Activated CD4-positive, alpha-beta memory T cell treated with anti-CD3 and anti-CD28 coated beads, Interleukin-2, amount 10 ng/mL, durations not matched to agents 7 days and 5 days (primary cell): ENCODE measurements at regions of chr6 and their contacts with region 1.

Region 1: GRCh38 chr6:139375232-139376016 is 976 bp upstream of the CITED2 start:
- DNase-seq: peak; percentile 86
- H3K4me3 Mint-ChIP-seq: peak overlapping the region; percentile 99
- H3K27ac Mint-ChIP-seq: peak overlapping the region; percentile 90
- H3K4me1 Mint-ChIP-seq: peaks cover 45% of the 10 kb centered on the region
- H3K27me3 Mint-ChIP-seq: no peaks in the 10 kb centered on the region

Region 2: DNA sequence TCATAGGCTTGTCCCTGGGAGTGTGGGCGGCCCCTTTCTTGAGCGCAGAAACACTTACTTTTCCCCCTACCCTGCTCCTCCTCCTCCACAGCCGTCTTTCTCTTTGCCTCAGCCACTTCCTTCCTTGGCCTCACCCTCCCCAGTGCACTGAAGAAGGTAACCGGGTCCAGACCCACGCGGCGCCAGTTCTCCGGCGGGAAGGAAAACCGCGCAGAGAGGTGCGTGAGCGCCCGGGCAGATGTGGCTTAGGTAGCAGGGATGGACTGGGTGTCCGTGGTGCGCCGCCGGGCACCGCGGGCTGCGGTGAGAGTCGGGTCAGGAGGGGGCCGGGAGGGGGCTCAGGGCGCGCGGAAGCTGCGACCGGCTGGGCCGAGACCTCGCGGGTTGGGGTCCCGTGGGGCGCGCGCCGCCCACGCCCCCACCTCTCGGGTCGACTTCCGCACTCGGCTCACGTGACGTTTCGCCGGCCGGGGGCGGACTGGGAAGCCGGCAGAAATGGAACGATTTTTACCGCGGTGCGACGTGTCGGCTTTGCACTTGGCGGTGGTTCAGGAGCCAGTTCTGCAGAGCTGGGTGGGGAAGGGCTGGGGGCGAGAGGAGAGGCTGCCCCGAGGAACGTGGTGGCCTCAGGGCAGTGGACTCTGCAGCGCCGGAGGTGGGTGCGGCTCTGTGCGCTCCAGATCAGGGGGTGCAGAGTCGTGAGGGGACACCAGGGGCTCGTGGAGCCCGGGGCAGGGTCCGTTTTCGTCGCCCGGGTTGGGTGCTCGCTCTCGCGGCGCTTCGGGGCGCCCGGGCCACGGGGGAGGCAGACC is 346.6 kb before region 1 on chr6 and contains the start of gene ABRACL:
- CTCF ChIA-PET with region 1: no interaction called
- POLR2A ChIA-PET with region 1: interaction called, 37 read pairs
- DNase-seq: peak; percentile 83
- H3K4me3 Mint-ChIP-seq: peak within 1 kb of the TSS; percentile 91
- H3K27ac Mint-ChIP-seq: peak within 1 kb of the TSS; percentile 75
- H3K4me1 Mint-ChIP-seq: peaks cover 25% of the 10 kb centered on the region
- H3K27me3 Mint-ChIP-seq: no peaks in the 10 kb centered on the region
- total RNA-seq, gene ABRACL: 174 to 176 TPM

Region 3: DNA sequence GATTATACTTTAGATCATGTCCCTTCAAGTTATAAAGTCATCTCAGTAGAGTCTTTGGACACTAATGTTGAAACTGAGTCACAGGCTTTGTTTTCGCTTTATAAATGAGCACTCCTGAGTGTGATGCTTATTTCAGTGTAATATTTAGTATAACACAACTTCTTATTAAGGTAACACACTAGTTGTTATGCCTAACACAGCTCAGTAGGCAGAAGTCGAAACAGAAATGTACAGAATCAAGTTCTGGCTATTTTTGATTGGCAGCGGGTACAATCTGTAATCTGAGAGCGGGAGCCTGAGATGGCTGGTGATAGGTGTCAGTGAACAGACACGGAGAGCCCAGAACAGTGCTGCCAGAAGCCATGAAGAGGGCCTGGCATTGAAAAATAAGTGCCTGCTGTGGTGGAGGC is 229.1 kb before region 1 on chr6:
- CTCF ChIA-PET with region 1: interaction called, 5 read pairs
- POLR2A ChIA-PET with region 1: interaction called, 12 read pairs
- DNase-seq: no peak
- H3K4me3 Mint-ChIP-seq: peak overlapping the region; percentile 49
- H3K27ac Mint-ChIP-seq: peak overlapping the region; percentile 88
- H3K4me1 Mint-ChIP-seq: peaks cover 93% of the 10 kb centered on the region
- H3K27me3 Mint-ChIP-seq: no peaks in the 10 kb centered on the region

Region 4: DNA sequence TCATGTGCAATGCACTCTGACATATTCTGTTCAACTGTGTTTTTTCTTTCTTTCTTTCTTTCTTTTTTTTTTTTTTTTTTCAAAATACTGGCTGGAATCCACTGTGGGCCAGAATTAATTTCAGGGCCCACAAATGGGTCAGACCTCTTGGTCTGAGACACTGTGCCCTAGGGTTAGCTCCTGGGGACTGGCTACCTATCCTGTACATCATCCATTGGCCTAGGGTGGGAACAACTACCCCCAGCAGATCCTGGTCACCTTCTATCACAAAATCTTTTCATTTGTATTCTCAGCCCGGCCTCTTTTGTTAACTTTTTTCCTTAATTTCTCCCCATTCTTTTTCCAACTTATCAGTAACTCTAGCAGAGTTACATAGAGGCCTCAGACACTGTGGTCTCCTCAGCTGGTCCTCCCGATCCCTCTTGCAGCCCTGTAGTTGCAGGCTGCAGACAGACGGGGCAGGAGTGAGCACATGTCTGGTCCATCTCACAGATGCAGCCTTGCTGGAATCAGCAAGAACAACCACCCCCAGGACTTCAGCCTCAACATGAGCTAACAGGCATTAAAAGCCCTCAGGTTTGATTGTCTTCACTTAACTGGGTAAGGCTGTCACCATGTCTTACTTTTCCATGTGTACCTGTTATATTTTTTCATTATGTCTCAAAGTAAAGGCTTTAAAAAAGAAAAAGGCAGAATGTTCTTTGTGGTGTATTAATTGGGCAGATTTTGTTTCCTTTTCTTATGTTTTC is 125.0 kb before region 1 on chr6:
- CTCF ChIA-PET with region 1: interaction called, 7 read pairs
- POLR2A ChIA-PET with region 1: interaction called, 12 read pairs
- DNase-seq: peak; percentile 78
- H3K4me3 Mint-ChIP-seq: peak overlapping the region; percentile 70
- H3K27ac Mint-ChIP-seq: peak overlapping the region; percentile 93
- H3K4me1 Mint-ChIP-seq: peaks cover 44% of the 10 kb centered on the region
- H3K27me3 Mint-ChIP-seq: no peaks in the 10 kb centered on the region

Region 5: GRCh38 chr6:139323511-139324300 is 51.7 kb before region 1 on chr6:
- CTCF ChIA-PET with region 1: no interaction called
- POLR2A ChIA-PET with region 1: interaction called, 12 read pairs
- DNase-seq: peak; percentile 81
- H3K4me3 Mint-ChIP-seq: peak overlapping the region; percentile 70
- H3K27ac Mint-ChIP-seq: peak overlapping the region; percentile 96
- H3K4me1 Mint-ChIP-seq: peaks cover 31% of the 10 kb centered on the region
- H3K27me3 Mint-ChIP-seq: no peaks in the 10 kb centered on the region

Region 6: GRCh38 chr6:139490482-139490881 is 115.1 kb after region 1 on chr6:
- CTCF ChIA-PET with region 1: no interaction called
- POLR2A ChIA-PET with region 1: interaction called, 10 read pairs
- DNase-seq: peak; percentile 20
- H3K4me3 Mint-ChIP-seq: no peak overlapping the region
- H3K27ac Mint-ChIP-seq: no peak overlapping the region
- H3K4me1 Mint-ChIP-seq: peaks cover 4% of the 10 kb centered on the region
- H3K27me3 Mint-ChIP-seq: no peaks in the 10 kb centered on the region

Region 7: GRCh38 chr6:139540276-139540675 is 164.9 kb after region 1 on chr6:
- CTCF ChIA-PET with region 1: interaction called, 16 read pairs
- POLR2A ChIA-PET with region 1: interaction called, 75 read pairs
- DNase-seq: peak; percentile 78
- H3K4me3 Mint-ChIP-seq: peak overlapping the region; percentile 51
- H3K27ac Mint-ChIP-seq: peak overlapping the region; percentile 97
- H3K4me1 Mint-ChIP-seq: peaks cover 82% of the 10 kb centered on the region
- H3K27me3 Mint-ChIP-seq: no peaks in the 10 kb centered on the region